ACHN (cell line): ENCODE measurements at regions of chr7 and their contacts with region 1.

Region 1: DNA sequence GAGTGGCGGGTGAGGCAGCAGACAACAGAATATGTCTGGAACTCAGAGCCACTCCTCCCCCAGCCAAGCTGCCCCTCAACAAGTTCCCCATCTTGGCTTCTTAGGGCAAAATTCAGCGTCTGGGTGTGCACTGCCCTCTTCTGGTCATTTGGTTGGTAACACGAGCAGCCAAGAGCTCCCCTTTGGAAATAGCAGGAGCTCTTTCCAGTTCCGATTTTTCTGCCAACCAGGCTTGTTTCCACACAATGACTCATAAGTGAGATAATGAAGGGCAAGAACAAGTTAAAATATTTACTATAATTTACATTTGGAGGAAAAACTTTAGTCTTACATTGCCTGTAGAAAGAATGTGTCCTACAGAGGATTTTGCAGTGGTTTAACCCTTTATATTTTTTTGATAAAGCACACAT is 70.5 kb downstream of the ADCYAP1R1 start:
- DNase-seq: peak; percentile 76

Region 2: GRCh38 chr7:30799206-30799975 is 323.3 kb before region 1 on chr7:
- in situ Hi-C with region 1: loop called (anchors 25 kb)
- DNase-seq: peak; percentile 74

Region 3: GRCh38 chr7:30983042-30983913 is 139.4 kb before region 1 on chr7:
- in situ Hi-C with region 1: loop called (anchors 25 kb)
- DNase-seq: peak; percentile 81

Region 4: GRCh38 chr7:31214751-31215150 is 92.1 kb after region 1 on chr7:
- in situ Hi-C with region 1: no loop called
- DNase-seq: no peak